Prostate gland (tissue), 2 donors: ENCODE measurements at regions of chr9 and their contacts with region 1.

Region 1: GRCh38 chr9:116860509-116861120 is 173.5 kb downstream of the TRIM32 start:
- DNase-seq: peak; percentile 46
- H3K4me3 ChIP-seq: no peak overlapping the region
- H3K27ac ChIP-seq: no peak overlapping the region
- H3K4me1 ChIP-seq: no peaks in the 10 kb centered on the region
- H3K27me3 ChIP-seq: no peaks in the 10 kb centered on the region
- CTCF ChIP-seq: peak; percentile 50 to 86 (median 66)
- POLR2A ChIP-seq: no peak

Region 2: GRCh38 chr9:116737152-116737546 is 123.5 kb before region 1 on chr9:
- intact Hi-C with region 1: loop called (anchors 10 kb)
- DNase-seq: peak; percentile 70
- H3K4me3 ChIP-seq: no peak overlapping the region
- H3K27ac ChIP-seq: no peak overlapping the region
- H3K4me1 ChIP-seq: no peaks in the 10 kb centered on the region
- H3K27me3 ChIP-seq: no peaks in the 10 kb centered on the region
- CTCF ChIP-seq: peak; percentile 65 to 95 (median 82)
- POLR2A ChIP-seq: no peak

Region 3: DNA sequence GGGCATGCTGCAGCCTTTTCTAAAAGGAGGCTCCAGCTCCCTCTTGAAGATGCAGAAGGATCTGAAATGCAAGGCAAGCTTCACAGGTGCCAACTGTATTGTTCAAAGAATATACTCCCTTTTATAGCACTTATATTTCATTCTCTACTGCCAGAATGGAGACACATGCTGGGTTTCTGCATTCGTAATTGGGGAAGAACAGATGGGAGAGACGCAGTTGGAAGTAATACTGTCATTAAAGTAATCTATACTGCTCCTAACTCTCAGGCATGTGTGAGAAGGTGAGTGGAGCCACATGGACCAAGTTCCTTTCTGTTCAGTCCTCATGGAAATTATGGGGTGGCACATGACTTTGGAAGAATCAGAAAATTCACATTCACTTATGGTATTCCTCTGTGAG is 52.9 kb after region 1 on chr9:
- intact Hi-C with region 1: no loop called
- DNase-seq: no peak
- H3K4me3 ChIP-seq: no peak overlapping the region
- H3K27ac ChIP-seq: no peak overlapping the region
- H3K4me1 ChIP-seq: no peaks in the 10 kb centered on the region
- H3K27me3 ChIP-seq: no peaks in the 10 kb centered on the region
- CTCF ChIP-seq: no peak
- POLR2A ChIP-seq: no peak

Region 4: DNA sequence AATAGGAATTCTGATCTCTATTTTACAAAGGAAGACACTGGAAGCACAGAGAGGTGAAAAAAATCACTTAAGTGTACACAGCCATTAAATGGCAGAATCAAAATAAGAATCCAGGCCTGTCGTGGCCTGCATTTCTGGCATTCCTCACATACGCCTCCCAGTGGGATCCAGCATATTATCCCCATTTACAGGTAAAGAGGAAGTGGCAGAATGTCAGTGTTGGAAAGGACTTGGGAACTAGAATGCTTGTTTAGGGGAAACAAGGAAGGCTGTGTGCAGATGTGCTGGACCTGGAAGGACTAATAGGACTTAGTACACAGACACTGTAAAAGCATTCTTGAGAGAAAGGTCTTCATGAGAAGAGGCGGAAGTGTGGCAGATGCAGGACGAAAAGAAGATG is 68.3 kb after region 1 on chr9:
- intact Hi-C with region 1: no loop called
- DNase-seq: no peak
- H3K4me3 ChIP-seq: no peak overlapping the region
- H3K27ac ChIP-seq: no peak overlapping the region
- H3K4me1 ChIP-seq: no peaks in the 10 kb centered on the region
- H3K27me3 ChIP-seq: no peaks in the 10 kb centered on the region
- CTCF ChIP-seq: no peak
- POLR2A ChIP-seq: no peak